ENCODE measurements at regions of chr20 and their contacts with region 1.

Region 1: GRCh38 chr20:9359561-9360308 is 154.7 kb upstream of the LAMP5 start:
- DNase-seq: peak; percentile 82
- H3K4me3 ChIP-seq: no peak overlapping the region
- H3K27ac ChIP-seq: no peak overlapping the region
- H3K4me1 ChIP-seq: no peaks in the 10 kb centered on the region
- H3K27me3 ChIP-seq: no peaks in the 10 kb centered on the region
- CTCF ChIP-seq: peak; percentile 31 to 42
- POLR2A ChIP-seq: no peak

Region 2: GRCh38 chr20:8749986-8750385 is 609.7 kb before region 1 on chr20:
- CTCF ChIA-PET with region 1: interaction called, 11 read pairs
- POLR2A ChIA-PET with region 1: no interaction called
- dilution Hi-C with region 1: no loop called
- intact Hi-C with region 1: loop called (anchors 2 kb)
- DNase-seq: no peak
- H3K4me3 ChIP-seq: no peak overlapping the region
- H3K27ac ChIP-seq: no peak overlapping the region
- H3K4me1 ChIP-seq: no peaks in the 10 kb centered on the region
- H3K27me3 ChIP-seq: no peaks in the 10 kb centered on the region
- CTCF ChIP-seq: no peak
- POLR2A ChIP-seq: no peak

Region 3: DNA sequence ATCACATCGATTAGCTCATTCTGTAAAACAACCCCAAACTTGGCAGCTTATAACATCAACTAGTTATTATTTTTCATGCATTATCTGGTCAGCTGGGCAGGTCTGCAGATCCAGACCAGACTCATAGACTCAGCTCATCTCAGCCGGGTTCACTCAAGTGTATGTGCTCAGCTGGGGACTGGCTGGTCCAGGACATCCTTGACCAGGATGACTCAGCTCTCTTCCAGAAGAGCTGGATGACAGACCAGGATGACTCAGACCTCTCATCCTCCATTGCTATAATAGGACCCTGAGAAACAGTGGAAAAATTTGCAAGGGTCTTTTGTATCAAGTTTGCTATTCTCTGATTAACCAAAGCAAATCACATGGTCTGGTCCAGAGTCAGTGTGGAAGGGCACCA is 603.3 kb before region 1 on chr20:
- CTCF ChIA-PET with region 1: interaction called, 23 read pairs
- POLR2A ChIA-PET with region 1: no interaction called
- dilution Hi-C with region 1: no loop called
- intact Hi-C with region 1: loop called (anchors 1 kb)
- DNase-seq: peak; percentile 62
- H3K4me3 ChIP-seq: no peak overlapping the region
- H3K27ac ChIP-seq: no peak overlapping the region
- H3K4me1 ChIP-seq: peaks cover 6% of the 10 kb centered on the region
- H3K27me3 ChIP-seq: no peaks in the 10 kb centered on the region
- CTCF ChIP-seq: no peak
- POLR2A ChIP-seq: no peak

Region 4: DNA sequence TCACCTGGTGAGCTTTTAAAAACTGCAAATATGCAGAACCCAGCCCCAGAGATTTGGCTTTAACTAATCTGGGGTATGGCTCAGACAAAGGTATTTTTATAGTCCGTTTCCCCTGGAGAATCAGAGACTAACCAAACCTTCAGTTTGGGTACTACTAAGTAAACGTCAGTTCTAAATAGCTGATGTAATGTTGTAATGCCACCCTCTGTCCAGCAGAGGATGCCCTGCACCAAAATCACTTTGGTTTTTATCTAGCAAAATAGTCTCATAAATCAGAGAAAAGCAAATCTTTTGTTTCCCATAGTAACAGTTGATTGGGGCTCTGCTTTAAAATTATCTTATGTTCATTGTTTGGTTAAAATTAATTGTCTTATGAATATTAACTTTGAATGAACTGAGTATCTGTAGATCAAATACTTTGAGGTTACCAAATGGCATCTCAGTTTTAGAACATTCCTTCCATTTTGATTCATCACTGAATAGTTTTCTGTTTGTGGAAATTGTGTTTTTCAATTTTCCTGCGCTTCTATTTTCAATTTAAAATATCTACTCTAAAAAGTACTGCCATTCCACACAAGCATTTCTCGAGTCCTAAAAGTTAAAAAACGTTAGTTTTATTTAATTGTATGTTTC is 569.2 kb before region 1 on chr20:
- CTCF ChIA-PET with region 1: interaction called, 25 read pairs
- POLR2A ChIA-PET with region 1: interaction called, 3 read pairs
- dilution Hi-C with region 1: no loop called
- intact Hi-C with region 1: loop called (anchors 1 kb)
- DNase-seq: peak; percentile 75
- H3K4me3 ChIP-seq: no peak overlapping the region
- H3K27ac ChIP-seq: no peak overlapping the region
- H3K4me1 ChIP-seq: no peaks in the 10 kb centered on the region
- H3K27me3 ChIP-seq: no peaks in the 10 kb centered on the region
- CTCF ChIP-seq: peak; percentile 71 to 85
- POLR2A ChIP-seq: no peak

Region 5: GRCh38 chr20:9068851-9069663 is 290.7 kb before region 1 on chr20 and contains the start of gene PLCB4:
- CTCF ChIA-PET with region 1: interaction called, 4 read pairs
- POLR2A ChIA-PET with region 1: no interaction called
- dilution Hi-C with region 1: no loop called
- intact Hi-C with region 1: loop called (anchors 2 kb)
- DNase-seq: peak; percentile 46
- H3K4me3 ChIP-seq: peak within 1 kb of the TSS; percentile 42 to 81 (median 69)
- H3K27ac ChIP-seq: no peak within 1 kb of the TSS
- H3K4me1 ChIP-seq: no peaks in the 10 kb centered on the region
- H3K27me3 ChIP-seq: peaks cover 0 to 5% of the 10 kb centered on the region in 2 experiments
- CTCF ChIP-seq: no peak
- POLR2A ChIP-seq: no peak
- total RNA-seq, gene PLCB4: 1.6 and 1.7 TPM in 2 replicates

Region 6: GRCh38 chr20:9215539-9215938 is 144.2 kb before region 1 on chr20:
- CTCF ChIA-PET with region 1: no interaction called
- POLR2A ChIA-PET with region 1: no interaction called
- dilution Hi-C with region 1: no loop called
- intact Hi-C with region 1: loop called (anchors 1 kb)
- DNase-seq: peak; percentile 6
- H3K4me3 ChIP-seq: no peak overlapping the region
- H3K27ac ChIP-seq: no peak overlapping the region
- H3K4me1 ChIP-seq: no peaks in the 10 kb centered on the region
- H3K27me3 ChIP-seq: no peaks in the 10 kb centered on the region
- CTCF ChIP-seq: peak; percentile 13 to 16
- POLR2A ChIP-seq: no peak

Measured in endothelial cell of umbilical vein (primary cell).